ENCODE measurements at regions of chr12 and their contacts with region 1.

Region 1: DNA sequence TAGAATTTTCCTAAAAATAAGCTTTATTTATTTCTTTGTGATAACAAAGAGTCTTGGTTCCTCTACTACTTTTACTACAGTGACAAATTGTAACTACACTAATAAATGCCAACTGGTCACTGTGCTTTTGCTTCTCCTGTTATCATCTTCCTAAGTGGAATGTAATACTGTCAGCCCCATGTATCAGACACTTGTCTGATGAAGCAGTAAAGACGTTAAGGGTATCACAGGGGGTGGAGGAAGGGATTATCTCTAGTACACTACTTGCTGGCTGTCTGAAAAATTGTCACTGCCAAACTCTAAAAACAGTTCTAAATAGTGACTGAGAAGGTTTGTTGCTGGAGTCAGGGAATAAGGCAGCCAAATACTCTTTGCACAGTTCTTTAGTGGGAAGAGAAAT is 11.3 kb downstream of the ASB8 start:
- DNase-seq: no peak
- ATAC-seq: peak in 6 of 8 donors; percentile 48 to 91 (median 82)
- H3K4me3 ChIP-seq: no peak overlapping the region
- H3K27ac ChIP-seq: peak overlapping the region in 8 of 10 donors; percentile 3 to 71 (median 53)
- H3K4me1 ChIP-seq: peaks cover 0 to 56% (median 21%) of the 10 kb centered on the region in 9 donors
- H3K27me3 ChIP-seq: no peaks in the 10 kb centered on the region
- CTCF ChIP-seq: no peak

Region 2: DNA sequence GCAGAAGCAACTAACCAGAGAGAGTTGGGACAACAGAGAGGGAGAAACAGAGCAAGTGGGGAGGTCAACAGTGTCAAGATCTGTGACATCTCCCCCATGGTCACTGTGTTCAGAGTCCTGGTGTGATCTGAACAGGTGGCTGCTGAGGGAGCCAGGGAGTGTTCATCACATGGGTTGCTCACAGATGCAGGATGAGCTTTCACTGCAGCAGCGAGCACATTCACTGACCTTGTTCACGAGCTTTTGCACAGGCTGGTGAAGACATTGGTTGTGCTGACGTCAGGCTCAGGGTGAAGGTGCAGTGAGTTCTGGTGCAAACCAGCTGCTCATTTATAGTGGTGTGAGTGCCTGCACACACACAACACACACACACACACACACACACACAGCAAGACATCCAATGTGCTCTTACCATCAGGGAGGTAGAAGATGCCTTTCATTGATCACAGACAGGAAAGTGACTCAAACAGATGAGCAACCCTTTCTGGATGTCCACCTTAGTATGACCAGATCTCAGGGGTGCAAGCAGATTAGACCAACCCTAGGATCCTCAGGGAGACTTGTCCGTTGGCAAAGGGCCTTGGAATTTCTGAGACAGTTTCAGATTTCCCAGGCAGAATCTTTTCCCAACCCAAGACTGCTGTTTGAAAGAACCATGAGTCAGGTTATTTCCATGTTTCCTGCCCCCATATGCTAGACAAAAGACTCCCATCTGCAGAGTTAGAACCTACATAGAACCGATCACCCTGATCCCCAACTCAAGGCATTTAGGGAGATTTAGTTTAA is 101.4 kb after region 1 on chr12:
- intact Hi-C with region 1: no loop called
- DNase-seq: no peak
- ATAC-seq: no peak
- H3K4me3 ChIP-seq: no peak overlapping the region
- H3K27ac ChIP-seq: no peak overlapping the region
- H3K4me1 ChIP-seq: no peaks in the 10 kb centered on the region
- H3K27me3 ChIP-seq: peaks cover 0 to 6% (median 0%) of the 10 kb centered on the region in 7 donors
- CTCF ChIP-seq: no peak

Region 3: DNA sequence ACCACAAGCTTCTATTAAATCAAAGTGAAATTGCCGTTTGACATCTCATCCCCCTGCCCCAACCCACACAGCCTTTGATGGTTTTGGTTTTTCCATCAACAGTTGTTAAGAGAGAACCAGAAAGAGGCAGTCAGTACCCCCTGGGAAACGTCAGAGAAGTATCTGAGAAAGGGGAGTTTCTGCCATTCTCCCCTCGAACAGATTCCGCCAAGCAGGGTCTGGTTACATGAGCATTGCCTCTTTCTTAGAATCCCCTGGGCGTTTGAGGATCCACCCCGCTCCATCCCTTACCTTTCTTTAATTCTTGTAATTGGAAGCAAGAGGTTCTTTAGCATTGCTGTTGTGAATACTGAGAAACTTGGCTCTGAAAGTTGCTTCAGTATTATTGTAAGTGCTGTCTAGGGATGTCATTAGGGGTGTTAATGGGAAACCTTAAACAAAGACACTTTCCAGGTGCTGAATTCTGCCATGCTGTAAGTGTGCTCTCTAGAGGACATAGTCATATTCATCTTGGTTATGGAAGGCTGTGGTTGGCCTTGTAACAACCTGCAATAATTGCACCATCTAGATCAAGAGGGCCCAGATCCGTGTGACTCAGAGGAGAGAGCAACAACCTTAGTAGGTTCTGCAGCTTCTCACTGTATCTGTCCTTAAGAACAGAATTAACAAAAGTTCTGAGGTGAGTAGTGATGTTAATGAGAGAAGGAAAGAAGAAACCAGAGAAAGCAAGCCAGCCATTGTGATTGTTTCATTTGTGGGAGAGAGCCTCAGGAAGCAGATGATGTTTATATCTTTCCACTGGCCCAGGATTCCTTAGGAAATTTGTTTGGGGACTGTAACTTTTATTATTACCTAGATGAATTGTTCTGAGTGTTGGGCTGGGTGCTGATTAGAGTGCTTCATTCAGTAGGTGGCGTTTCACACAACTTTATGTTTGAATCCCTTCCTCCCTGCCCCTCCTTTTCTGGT is 1604.3 kb after region 1 on chr12:
- intact Hi-C with region 1: loop called in 1 of 10 experiments (anchors 5 kb)
- DNase-seq: no peak
- ATAC-seq: peak in 6 of 8 donors; percentile 24 to 80 (median 36)
- H3K4me3 ChIP-seq: no peak overlapping the region
- H3K27ac ChIP-seq: peak overlapping the region in 6 of 10 donors; percentile 3 to 47 (median 20)
- H3K4me1 ChIP-seq: peaks cover 0 to 98% (median 93%) of the 10 kb centered on the region in 9 donors
- H3K27me3 ChIP-seq: no peaks in the 10 kb centered on the region
- CTCF ChIP-seq: peak in 1 of 9 donors; percentile 13

Measured in heart right ventricle (tissue), 16 donors.